CD8-positive, alpha-beta T cell (primary cell): ENCODE measurements at regions of chr5 and their contacts with region 1.

Region 1: GRCh38 chr5:131769961-131770360 is 26.9 kb downstream of the FNIP1 start:
- DNase-seq: no peak
- ATAC-seq: no peak
- H3K4me3 ChIP-seq: no peak overlapping the region
- H3K4me3 Mint-ChIP-seq: no peak overlapping the region
- H3K27ac ChIP-seq: no peak overlapping the region
- H3K27ac Mint-ChIP-seq: no peak overlapping the region
- H3K4me1 ChIP-seq: peaks cover 7% of the 10 kb centered on the region
- H3K4me1 Mint-ChIP-seq: peaks cover 29% of the 10 kb centered on the region
- H3K27me3 ChIP-seq: no peaks in the 10 kb centered on the region
- H3K27me3 Mint-ChIP-seq: no peaks in the 10 kb centered on the region
- CTCF ChIP-seq: no peak

Region 2: GRCh38 chr5:131640043-131640856 is 129.7 kb before region 1 on chr5:
- CTCF ChIA-PET with region 1: no interaction called
- POLR2A ChIA-PET with region 1: no interaction called
- intact Hi-C with region 1: no loop called
- DNase-seq: peak in 7 of 9 experiments; percentile 18 to 72 (median 57)
- ATAC-seq: peak; percentile 82
- H3K4me3 ChIP-seq: no peak overlapping the region
- H3K4me3 Mint-ChIP-seq: peak overlapping the region; percentile 62
- H3K27ac ChIP-seq: peak overlapping the region; percentile 27 to 31
- H3K27ac Mint-ChIP-seq: peak overlapping the region; percentile 94
- H3K4me1 ChIP-seq: peaks cover 35% of the 10 kb centered on the region
- H3K4me1 Mint-ChIP-seq: peaks cover 30% of the 10 kb centered on the region
- H3K27me3 ChIP-seq: no peaks in the 10 kb centered on the region
- H3K27me3 Mint-ChIP-seq: no peaks in the 10 kb centered on the region
- CTCF ChIP-seq: no peak

Region 3: GRCh38 chr5:131684595-131684994 is 85.4 kb before region 1 on chr5:
- CTCF ChIA-PET with region 1: no interaction called
- POLR2A ChIA-PET with region 1: no interaction called
- intact Hi-C with region 1: no loop called
- DNase-seq: no peak
- ATAC-seq: no peak
- H3K4me3 ChIP-seq: no peak overlapping the region
- H3K4me3 Mint-ChIP-seq: no peak overlapping the region
- H3K27ac ChIP-seq: no peak overlapping the region
- H3K27ac Mint-ChIP-seq: no peak overlapping the region
- H3K4me1 ChIP-seq: no peaks in the 10 kb centered on the region
- H3K4me1 Mint-ChIP-seq: no peaks in the 10 kb centered on the region
- H3K27me3 ChIP-seq: no peaks in the 10 kb centered on the region
- H3K27me3 Mint-ChIP-seq: no peaks in the 10 kb centered on the region
- CTCF ChIP-seq: no peak

Region 4: GRCh38 chr5:131786900-131787692 is 17.1 kb after region 1 on chr5:
- CTCF ChIA-PET with region 1: no interaction called
- POLR2A ChIA-PET with region 1: no interaction called
- intact Hi-C with region 1: loop called in 1 of 2 experiments (anchors 2 kb)
- DNase-seq: no peak
- ATAC-seq: no peak
- H3K4me3 ChIP-seq: no peak overlapping the region
- H3K4me3 Mint-ChIP-seq: no peak overlapping the region
- H3K27ac ChIP-seq: no peak overlapping the region
- H3K27ac Mint-ChIP-seq: no peak overlapping the region
- H3K4me1 ChIP-seq: peaks cover 10% of the 10 kb centered on the region
- H3K4me1 Mint-ChIP-seq: peaks cover 54% of the 10 kb centered on the region
- H3K27me3 ChIP-seq: no peaks in the 10 kb centered on the region
- H3K27me3 Mint-ChIP-seq: no peaks in the 10 kb centered on the region
- CTCF ChIP-seq: no peak